ENCODE measurements at regions of chr9 and their contacts with region 1.

Region 1: GRCh38 chr9:108634204-108634603 is 221.6 kb downstream of the ACTL7B start:
- DNase-seq: peak; percentile 48 to 65
- H3K4me3 ChIP-seq: no peak overlapping the region
- H3K27ac ChIP-seq: peak overlapping the region; percentile 14; the same call in 1 of the 2 replicates
- H3K4me1 ChIP-seq: peaks cover 7% of the 10 kb centered on the region; the same call in 1 of the 2 replicates
- H3K27me3 ChIP-seq: no peaks in the 10 kb centered on the region
- CTCF ChIP-seq: no peak

Region 2: GRCh38 chr9:107576962-107577776 is 1057.0 kb before region 1 on chr9:
- CTCF ChIA-PET with region 1: no interaction called
- POLR2A ChIA-PET with region 1: no interaction called
- intact Hi-C with region 1: no loop called
- DNase-seq: no peak
- H3K4me3 ChIP-seq: no peak overlapping the region
- H3K27ac ChIP-seq: no peak overlapping the region
- H3K4me1 ChIP-seq: no peaks in the 10 kb centered on the region
- H3K27me3 ChIP-seq: no peaks in the 10 kb centered on the region
- CTCF ChIP-seq: no peak

Region 3: DNA sequence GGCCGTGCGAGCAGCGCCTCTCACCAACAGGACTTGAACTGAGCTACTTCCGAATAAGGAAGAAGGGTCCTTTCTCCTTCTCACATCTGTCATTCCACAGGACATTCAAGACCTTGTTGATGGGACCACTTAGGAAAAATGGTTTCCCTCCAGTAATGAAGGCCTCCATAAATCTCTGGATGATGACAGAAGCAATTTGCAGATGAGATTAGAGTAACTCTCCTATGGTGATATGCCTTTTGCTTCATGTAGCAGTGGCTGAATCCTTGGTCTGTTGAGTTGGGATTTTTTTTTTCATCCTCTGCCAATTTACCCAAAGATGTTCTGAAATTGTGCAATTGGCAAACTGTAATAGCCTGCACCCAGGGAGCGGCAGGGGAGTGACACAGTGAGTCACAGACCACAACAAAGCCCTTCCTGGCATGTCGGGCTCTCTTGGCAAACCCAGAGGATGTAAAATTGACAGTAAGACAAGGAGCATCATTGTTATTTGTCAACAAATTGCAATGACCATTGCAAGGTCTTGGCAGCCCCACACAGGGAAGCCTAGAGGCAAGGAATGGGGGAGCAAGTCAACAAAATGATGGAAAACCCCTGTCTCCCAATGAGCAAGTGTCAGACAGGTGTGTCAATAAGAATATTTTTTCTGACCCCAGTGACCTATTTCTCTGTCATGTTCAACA is 54.3 kb before region 1 on chr9:
- CTCF ChIA-PET with region 1: no interaction called
- POLR2A ChIA-PET with region 1: no interaction called
- intact Hi-C with region 1: loop called (anchors 2 kb)
- DNase-seq: peak; percentile 84 to 91
- H3K4me3 ChIP-seq: no peak overlapping the region
- H3K27ac ChIP-seq: no peak overlapping the region
- H3K4me1 ChIP-seq: peaks cover 23% of the 10 kb centered on the region
- H3K27me3 ChIP-seq: no peaks in the 10 kb centered on the region
- CTCF ChIP-seq: no peak

Region 4: DNA sequence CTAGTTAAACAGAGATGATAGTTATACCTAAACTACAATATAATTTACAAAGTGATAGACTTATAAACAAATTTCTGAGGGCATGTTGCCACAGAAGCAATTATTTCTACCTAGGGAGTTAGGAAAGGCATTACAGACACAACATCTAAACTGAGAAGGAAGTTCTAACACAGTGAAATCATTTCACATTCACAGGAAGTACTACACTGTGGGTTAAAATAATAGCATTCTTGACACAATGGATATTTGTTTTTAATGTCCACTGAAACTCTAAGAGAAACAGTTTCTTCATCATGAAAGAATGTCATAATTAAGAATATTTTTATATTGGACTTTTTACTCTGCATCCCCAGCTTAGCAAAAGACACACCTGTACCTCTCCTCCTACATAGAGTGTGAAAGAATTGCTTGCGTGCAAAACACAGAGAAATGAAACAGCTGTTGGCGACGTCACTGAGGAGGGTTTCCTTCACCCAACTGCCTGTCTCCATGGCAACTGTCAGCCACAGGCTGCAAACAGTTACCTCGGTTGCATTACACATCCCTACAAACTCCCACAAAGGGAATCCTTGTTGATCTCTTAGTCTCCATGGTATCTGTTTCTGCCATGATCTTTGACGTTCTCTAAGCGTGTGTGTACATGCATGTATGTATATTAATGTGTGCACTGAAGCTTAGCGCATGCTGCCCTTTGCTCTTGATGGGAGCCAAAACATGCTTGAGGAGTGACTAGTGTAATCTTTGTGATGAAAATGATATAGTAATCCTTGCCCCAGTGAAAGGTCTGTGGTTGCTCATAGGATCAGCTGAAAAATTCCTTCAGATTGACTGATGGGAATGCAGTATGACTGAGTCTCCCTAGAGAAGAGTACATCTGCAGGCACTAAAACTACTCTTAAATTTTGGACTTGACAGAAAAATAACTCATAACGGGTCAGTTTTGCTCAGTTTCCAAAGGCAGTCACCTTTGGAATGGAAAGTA is 53.1 kb after region 1 on chr9:
- CTCF ChIA-PET with region 1: no interaction called
- POLR2A ChIA-PET with region 1: no interaction called
- intact Hi-C with region 1: loop called (anchors 5 kb)
- DNase-seq: no peak
- H3K4me3 ChIP-seq: no peak overlapping the region
- H3K27ac ChIP-seq: no peak overlapping the region
- H3K4me1 ChIP-seq: peaks cover 16% of the 10 kb centered on the region
- H3K27me3 ChIP-seq: no peaks in the 10 kb centered on the region
- CTCF ChIP-seq: no peak